ENCODE measurements at regions of chr12 and their contacts with region 1.

Region 1: GRCh38 chr12:6195665-6196535 is 4.3 kb upstream of the CD9 start:
- DNase-seq: peak; percentile 73 to 83 (median 80)
- ATAC-seq: peak; percentile 96
- H3K4me3 ChIP-seq: no peak overlapping the region
- H3K27ac ChIP-seq: no peak overlapping the region
- H3K4me1 ChIP-seq: peaks cover 0 to 11% of the 10 kb centered on the region in 2 experiments; a peak in 3 of 5 replicates
- H3K27me3 ChIP-seq: peaks cover 11 to 43% of the 10 kb centered on the region in 2 experiments; a peak in 4 of 5 replicates
- CTCF ChIP-seq: peak; percentile 80 to 82 (median 80)
- EP300 ChIP-seq: no peak
- POLR2A ChIP-seq: no peak
- RAD21 ChIP-seq: peak; percentile 75 to 86

Region 2: GRCh38 chr12:5988088-5988487 is 207.8 kb before region 1 on chr12:
- CTCF ChIA-PET with region 1: no interaction called
- POLR2A ChIA-PET with region 1: no interaction called
- in situ Hi-C with region 1: no loop called
- intact Hi-C with region 1: no loop called
- DNase-seq: no peak
- ATAC-seq: no peak
- H3K4me3 ChIP-seq: no peak overlapping the region
- H3K27ac ChIP-seq: no peak overlapping the region
- H3K4me1 ChIP-seq: no peaks in the 10 kb centered on the region
- H3K27me3 ChIP-seq: no peaks in the 10 kb centered on the region; a peak in 1 of 5 replicates
- CTCF ChIP-seq: no peak
- EP300 ChIP-seq: no peak
- POLR2A ChIP-seq: no peak
- RAD21 ChIP-seq: no peak

Region 3: DNA sequence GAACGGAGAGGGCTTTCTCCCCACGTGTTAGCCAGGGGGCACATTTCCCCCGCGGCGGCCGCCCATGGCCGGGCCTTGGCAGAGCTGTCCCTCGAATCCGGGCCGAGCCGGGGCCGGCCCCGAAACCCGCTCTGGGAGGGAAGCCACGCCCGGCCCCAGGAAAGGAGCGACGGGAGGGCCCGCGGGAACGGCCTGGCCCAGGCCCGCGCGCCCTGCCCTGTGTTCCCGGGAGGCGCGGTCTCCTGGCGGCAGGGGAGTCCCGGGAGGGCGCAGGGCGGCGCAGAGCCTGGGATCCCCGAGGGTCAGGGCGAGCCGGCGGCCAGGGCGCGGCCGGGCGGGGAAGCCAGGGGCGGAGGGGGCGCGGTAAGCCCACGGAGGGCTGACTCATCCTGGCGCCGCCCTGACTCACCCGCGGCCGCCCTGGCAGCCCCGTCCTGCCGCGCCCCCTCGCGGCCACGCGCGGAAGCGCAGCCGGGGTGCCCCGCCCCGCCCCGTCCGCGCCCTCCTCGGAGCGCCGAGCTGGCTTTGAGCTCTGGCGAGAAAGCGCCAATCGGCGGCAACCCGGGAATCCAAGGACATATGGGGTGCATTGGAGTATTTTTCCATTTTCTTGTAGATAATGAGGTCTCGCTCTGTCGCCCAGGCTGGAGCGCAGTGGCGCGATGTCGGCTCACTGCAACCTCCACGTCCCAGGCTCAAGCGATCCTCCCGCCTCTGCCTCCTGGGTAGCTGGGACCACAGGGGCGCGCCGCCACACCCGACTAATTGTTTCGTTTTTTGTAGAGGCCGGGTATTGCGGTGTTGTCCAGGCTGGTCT is 82.7 kb after region 1 on chr12:
- CTCF ChIA-PET with region 1: interaction called, 23 read pairs
- POLR2A ChIA-PET with region 1: no interaction called
- in situ Hi-C with region 1: no loop called
- intact Hi-C with region 1: no loop called
- DNase-seq: peak; percentile 84 to 93 (median 90)
- ATAC-seq: peak; percentile 99
- H3K4me3 ChIP-seq: peak overlapping the region; percentile 40
- H3K27ac ChIP-seq: peak overlapping the region; percentile 25; the same call in 2 of the 3 replicates
- H3K4me1 ChIP-seq: peaks cover 6 to 20% of the 10 kb centered on the region in 2 experiments; a peak in 4 of 5 replicates
- H3K27me3 ChIP-seq: peaks cover 6 to 7% of the 10 kb centered on the region in 2 experiments; a peak in 4 of 5 replicates
- CTCF ChIP-seq: peak; percentile 58 to 84 (median 75)
- EP300 ChIP-seq: 0 out of 2 replicates have a peak, but pooled peaks have one; percentile 10
- POLR2A ChIP-seq: no peak
- RAD21 ChIP-seq: peak; percentile 88 to 92

Region 4: GRCh38 chr12:6285063-6285477 is 89.2 kb after region 1 on chr12:
- CTCF ChIA-PET with region 1: interaction called, 23 read pairs
- POLR2A ChIA-PET with region 1: interaction called, 6 read pairs
- in situ Hi-C with region 1: no loop called
- intact Hi-C with region 1: loop called (anchors 2 kb)
- DNase-seq: peak; percentile 74 to 81 (median 77)
- ATAC-seq: peak; percentile 98
- H3K4me3 ChIP-seq: no peak overlapping the region
- H3K27ac ChIP-seq: no peak overlapping the region
- H3K4me1 ChIP-seq: no peaks in the 10 kb centered on the region; a peak in 2 of 5 replicates
- H3K27me3 ChIP-seq: peaks cover 0 to 6% of the 10 kb centered on the region in 2 experiments; a peak in 1 of 5 replicates
- CTCF ChIP-seq: peak; percentile 83 to 92 (median 83)
- EP300 ChIP-seq: no peak
- POLR2A ChIP-seq: no peak
- RAD21 ChIP-seq: peak; percentile 90 to 94

Measured in K562 (cell line).